WTC11 (cell line): ENCODE measurements at regions of chr9 and their contacts with region 1.

Region 1: GRCh38 chr9:93003552-93004407 is 54.7 kb upstream of the SUSD3 start:
- DNase-seq: peak; percentile 77
- ATAC-seq: peak; percentile 97
- H3K4me3 Mint-ChIP-seq: no peak overlapping the region
- H3K27ac Mint-ChIP-seq: no peak overlapping the region
- H3K4me1 Mint-ChIP-seq: peaks cover 15% of the 10 kb centered on the region
- H3K27me3 Mint-ChIP-seq: peaks cover 7% of the 10 kb centered on the region
- CTCF ChIP-seq: peak; percentile 53; the same call in 1 of the 2 replicates

Region 2: DNA sequence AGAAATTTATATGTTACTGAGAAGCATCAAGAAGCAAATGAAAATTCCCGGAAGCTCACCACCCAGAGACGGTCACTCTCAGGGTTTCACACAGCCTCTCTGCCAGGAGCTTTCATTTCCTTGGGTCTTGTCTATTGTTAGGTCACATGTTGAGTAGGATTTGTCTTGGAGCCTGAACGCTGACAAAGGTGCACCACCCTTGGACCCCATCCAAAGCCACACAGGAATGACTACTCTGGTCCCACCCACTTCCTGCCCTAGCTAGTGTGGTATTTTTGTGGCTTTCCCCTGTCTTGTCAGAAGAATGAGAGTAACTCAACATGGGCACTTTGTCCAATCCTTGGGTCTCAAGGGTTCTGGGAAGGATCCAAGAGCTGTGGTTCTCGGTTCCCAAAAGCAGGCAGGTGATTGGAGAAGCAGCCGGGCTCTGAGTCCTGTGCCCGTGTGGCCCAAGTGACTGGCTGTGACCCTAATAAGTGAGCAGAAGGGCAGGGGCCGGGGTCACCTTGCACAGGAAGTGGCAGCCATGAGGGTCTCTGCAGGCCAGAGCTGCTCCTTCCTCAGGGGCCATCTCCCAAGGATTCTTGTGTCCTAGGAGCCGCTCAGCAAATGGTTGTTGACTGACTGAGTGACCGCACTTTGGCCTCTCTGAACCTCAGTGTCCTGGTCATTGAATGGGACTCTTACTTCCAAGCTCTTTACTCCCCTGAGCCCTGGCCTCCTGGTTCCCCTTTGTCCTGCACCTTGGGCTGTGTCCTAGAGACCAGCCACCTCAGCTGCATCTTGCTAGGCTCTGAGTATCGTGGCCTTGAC is 49.5 kb before region 1 on chr9:
- CTCF ChIA-PET with region 1: interaction called, 13 read pairs
- POLR2A ChIA-PET with region 1: no interaction called
- DNase-seq: no peak
- ATAC-seq: no peak
- H3K4me3 Mint-ChIP-seq: no peak overlapping the region
- H3K27ac Mint-ChIP-seq: no peak overlapping the region
- H3K4me1 Mint-ChIP-seq: peaks cover 6% of the 10 kb centered on the region; the same call in 1 of the 2 replicates
- H3K27me3 Mint-ChIP-seq: no peaks in the 10 kb centered on the region
- CTCF ChIP-seq: no peak

Region 3: GRCh38 chr9:92992549-92992948 is 11.2 kb before region 1 on chr9:
- CTCF ChIA-PET with region 1: interaction called, 21 read pairs
- POLR2A ChIA-PET with region 1: no interaction called
- DNase-seq: peak; percentile 68
- ATAC-seq: peak; percentile 95
- H3K4me3 Mint-ChIP-seq: peak overlapping the region; percentile 14
- H3K27ac Mint-ChIP-seq: peak overlapping the region; percentile 73
- H3K4me1 Mint-ChIP-seq: peaks cover 57% of the 10 kb centered on the region
- H3K27me3 Mint-ChIP-seq: peaks cover 8% of the 10 kb centered on the region
- CTCF ChIP-seq: no peak

Region 4: GRCh38 chr9:93024986-93025630 is 21.3 kb after region 1 on chr9:
- CTCF ChIA-PET with region 1: interaction called, 16 read pairs
- POLR2A ChIA-PET with region 1: no interaction called
- DNase-seq: no peak
- ATAC-seq: no peak
- H3K4me3 Mint-ChIP-seq: no peak overlapping the region
- H3K27ac Mint-ChIP-seq: no peak overlapping the region; the same call in 1 of the 2 replicates
- H3K4me1 Mint-ChIP-seq: peaks cover 11% of the 10 kb centered on the region
- H3K27me3 Mint-ChIP-seq: no peaks in the 10 kb centered on the region; the same call in 1 of the 2 replicates
- CTCF ChIP-seq: no peak

Region 5: DNA sequence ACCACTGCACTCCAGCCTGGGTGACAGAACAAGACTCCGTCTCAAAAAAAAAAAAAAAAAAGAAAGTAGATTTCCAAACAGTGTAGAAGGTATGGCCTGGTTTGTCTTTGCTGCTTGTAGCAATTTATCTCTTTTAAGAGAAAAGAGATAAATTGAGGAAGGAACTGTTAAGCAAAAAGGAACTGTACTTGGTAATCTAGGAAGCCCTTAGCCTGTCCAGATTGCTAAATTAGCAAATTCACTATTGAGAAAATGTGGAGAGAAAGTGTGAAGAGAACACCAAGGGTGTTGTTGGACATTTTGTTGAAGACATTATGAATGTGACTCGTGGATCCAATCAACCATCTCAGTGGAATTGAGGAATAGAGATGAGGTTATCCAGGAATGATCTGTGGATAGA is 41.7 kb after region 1 on chr9:
- CTCF ChIA-PET with region 1: no interaction called
- POLR2A ChIA-PET with region 1: no interaction called
- DNase-seq: no peak
- ATAC-seq: no peak
- H3K4me3 Mint-ChIP-seq: no peak overlapping the region
- H3K27ac Mint-ChIP-seq: no peak overlapping the region
- H3K4me1 Mint-ChIP-seq: no peaks in the 10 kb centered on the region; the same call in 1 of the 2 replicates
- H3K27me3 Mint-ChIP-seq: no peaks in the 10 kb centered on the region; the same call in 1 of the 2 replicates
- CTCF ChIP-seq: no peak

Region 6: DNA sequence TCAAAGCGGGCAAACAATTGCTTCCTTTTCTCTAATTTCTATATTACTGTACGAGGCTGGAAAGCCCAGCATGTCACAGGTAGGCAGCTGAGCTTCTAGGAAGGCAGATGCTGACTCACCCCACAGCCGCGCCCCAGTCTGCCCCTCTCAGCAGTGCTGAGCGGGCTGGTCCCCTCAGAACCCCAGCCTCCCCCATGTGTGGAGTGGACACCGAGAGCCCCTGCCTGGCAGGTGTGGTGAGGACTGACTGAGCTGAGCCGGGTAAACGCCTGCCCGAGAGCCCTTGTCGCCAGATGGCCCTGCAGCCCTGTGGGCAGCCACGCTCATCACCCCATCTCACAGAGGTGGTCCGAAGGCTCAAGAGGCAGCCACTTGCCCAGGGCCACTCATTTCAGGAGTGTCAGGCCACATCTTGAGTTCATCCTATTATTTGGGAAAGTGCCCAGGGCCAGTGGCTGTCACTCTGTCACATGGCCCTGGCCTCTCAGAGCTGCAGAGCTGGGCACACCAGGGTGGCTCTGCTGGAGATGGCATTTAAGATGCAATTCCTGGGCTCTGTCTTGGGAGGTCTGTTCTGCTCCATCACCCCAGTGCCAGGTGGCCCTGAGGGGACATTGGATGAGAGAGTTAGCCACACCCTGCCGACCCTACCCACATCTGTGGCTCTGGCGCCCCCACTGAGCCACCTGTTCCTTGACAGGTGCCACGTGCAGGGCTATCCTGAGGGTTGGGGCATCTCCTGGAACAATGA is 104.7 kb after region 1 on chr9:
- CTCF ChIA-PET with region 1: interaction called, 15 read pairs
- POLR2A ChIA-PET with region 1: no interaction called
- DNase-seq: no peak
- ATAC-seq: 0 out of 2 replicates have a peak, but pooled peaks have one; percentile 10
- H3K4me3 Mint-ChIP-seq: no peak overlapping the region
- H3K27ac Mint-ChIP-seq: no peak overlapping the region
- H3K4me1 Mint-ChIP-seq: peaks cover 7% of the 10 kb centered on the region; the same call in 1 of the 2 replicates
- H3K27me3 Mint-ChIP-seq: no peaks in the 10 kb centered on the region
- CTCF ChIP-seq: no peak